ENCODE measurements at regions of chr2 and their contacts with region 1.

Region 1: DNA sequence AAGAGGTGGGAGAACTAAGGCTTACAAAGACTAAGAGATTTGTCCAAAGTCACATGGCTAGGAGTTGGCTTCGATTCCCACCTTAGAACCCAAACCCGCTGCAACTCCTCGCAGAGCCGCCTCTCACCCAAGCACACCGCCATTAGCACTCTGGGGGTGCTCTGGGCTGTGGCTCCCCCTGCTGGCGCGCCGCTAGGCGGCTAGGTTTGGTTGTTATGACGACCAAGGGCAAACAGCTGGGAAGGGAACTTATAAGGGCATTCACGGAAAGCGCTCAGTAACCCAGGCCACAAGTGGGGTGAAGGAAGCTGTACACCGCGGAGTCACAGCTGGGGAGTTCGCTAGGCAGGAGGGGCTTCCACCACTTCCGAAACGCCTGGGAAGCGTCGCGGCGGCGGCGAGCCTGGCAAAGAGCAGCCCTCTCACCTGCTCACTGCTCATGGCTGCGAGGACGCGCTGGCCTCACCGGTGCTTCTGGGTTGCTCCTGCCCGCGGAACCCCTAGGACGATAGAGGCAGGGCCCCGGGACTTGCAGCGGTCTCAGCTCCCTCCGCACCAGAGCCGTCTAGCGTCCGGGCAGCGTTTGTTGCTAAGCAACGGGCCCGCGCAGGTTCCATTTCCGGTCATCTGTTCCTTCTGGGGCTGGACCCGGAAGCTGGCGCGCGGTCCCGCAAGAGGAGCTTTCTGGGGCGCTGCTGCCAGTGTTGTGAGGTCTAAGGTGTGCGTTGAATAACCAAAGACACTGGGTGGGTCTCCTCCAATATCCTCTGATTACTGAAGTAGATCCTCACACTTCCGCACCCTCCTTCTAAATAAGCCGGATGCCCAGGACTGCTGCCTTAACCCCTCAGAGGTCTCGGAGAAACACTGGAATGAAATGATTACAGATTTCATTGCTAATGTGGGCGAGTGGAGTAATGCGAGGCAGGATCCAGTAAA is at the start of gene DNAH7:
- DNase-seq: peak; percentile 70
- ATAC-seq: peak; percentile 97
- H3K4me3 ChIP-seq: peak within 1 kb of the TSS; percentile 56 to 89 (median 78)
- H3K27ac ChIP-seq: peak within 1 kb of the TSS; percentile 48
- H3K4me1 ChIP-seq: peaks cover 10% of the 10 kb centered on the region
- H3K27me3 ChIP-seq: no peaks in the 10 kb centered on the region
- CTCF ChIP-seq: peak; percentile 98
- EP300 ChIP-seq: no peak
- POLR2A ChIP-seq: 0 out of 4 replicates have a peak, but pooled peaks of 1 of the 2 experiments have one; percentile 48
- RAD21 ChIP-seq: peak; percentile 67
- total RNA-seq, gene DNAH7: 0.07 and 0.09 TPM in 2 replicates

Region 2: DNA sequence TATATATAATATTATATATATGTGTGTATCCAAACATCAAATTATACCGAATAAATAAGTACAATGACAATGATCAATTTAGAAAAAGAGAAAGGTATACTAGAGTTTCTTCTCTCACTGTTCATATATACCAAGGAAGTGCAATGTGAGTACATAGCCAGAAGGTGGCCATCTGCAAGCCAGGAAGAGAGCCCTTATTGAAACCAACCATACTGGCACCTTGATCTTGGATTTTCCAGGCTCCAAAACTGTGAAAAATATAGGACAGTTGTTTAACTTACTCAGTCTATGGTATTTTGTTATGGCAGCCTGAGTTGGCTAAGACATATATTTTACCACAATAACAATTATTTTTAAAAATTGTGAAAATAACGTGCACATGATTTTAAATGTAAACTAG is 1901.7 kb before region 1 on chr2:
- CTCF ChIA-PET with region 1: no interaction called
- POLR2A ChIA-PET with region 1: no interaction called
- in situ Hi-C with region 1: no loop called
- intact Hi-C with region 1: loop called (anchors 5 kb)
- DNase-seq: peak; percentile 39
- ATAC-seq: peak; percentile 86
- H3K4me3 ChIP-seq: no peak overlapping the region
- H3K27ac ChIP-seq: no peak overlapping the region
- H3K4me1 ChIP-seq: no peaks in the 10 kb centered on the region
- H3K27me3 ChIP-seq: no peaks in the 10 kb centered on the region
- CTCF ChIP-seq: peak; percentile 65
- EP300 ChIP-seq: no peak
- POLR2A ChIP-seq: no peak
- RAD21 ChIP-seq: no peak

Region 3: GRCh38 chr2:195498176-195498575 is 570.4 kb before region 1 on chr2:
- CTCF ChIA-PET with region 1: interaction called, 7 read pairs
- POLR2A ChIA-PET with region 1: no interaction called
- in situ Hi-C with region 1: no loop called
- intact Hi-C with region 1: loop called (anchors 1 kb)
- DNase-seq: peak; percentile 50
- ATAC-seq: peak; percentile 72
- H3K4me3 ChIP-seq: no peak overlapping the region
- H3K27ac ChIP-seq: no peak overlapping the region
- H3K4me1 ChIP-seq: no peaks in the 10 kb centered on the region
- H3K27me3 ChIP-seq: 0 out of 5 replicates have a peak, but pooled peaks cover 0 to 3% of the 10 kb centered on the region in 2 experiments
- CTCF ChIP-seq: peak; percentile 52
- EP300 ChIP-seq: no peak
- POLR2A ChIP-seq: no peak
- RAD21 ChIP-seq: no peak

Region 4: GRCh38 chr2:195967336-195967735 is 101.2 kb before region 1 on chr2:
- CTCF ChIA-PET with region 1: no interaction called
- POLR2A ChIA-PET with region 1: no interaction called
- in situ Hi-C with region 1: no loop called
- intact Hi-C with region 1: no loop called
- DNase-seq: no peak
- ATAC-seq: no peak
- H3K4me3 ChIP-seq: no peak overlapping the region
- H3K27ac ChIP-seq: no peak overlapping the region
- H3K4me1 ChIP-seq: no peaks in the 10 kb centered on the region
- H3K27me3 ChIP-seq: no peaks in the 10 kb centered on the region
- CTCF ChIP-seq: no peak
- EP300 ChIP-seq: no peak
- POLR2A ChIP-seq: no peak
- RAD21 ChIP-seq: no peak

Region 5: GRCh38 chr2:196171248-196171871 is 102.8 kb after region 1 on chr2 and contains the start of gene STK17B:
- CTCF ChIA-PET with region 1: no interaction called
- POLR2A ChIA-PET with region 1: no interaction called
- in situ Hi-C with region 1: no loop called
- intact Hi-C with region 1: loop called (anchors 5 kb)
- DNase-seq: peak; percentile 89
- ATAC-seq: peak; percentile 92
- H3K4me3 ChIP-seq: peak within 1 kb of the TSS; percentile 84 to 89 (median 88)
- H3K27ac ChIP-seq: peak within 1 kb of the TSS; percentile 39
- H3K4me1 ChIP-seq: peaks cover 16% of the 10 kb centered on the region
- H3K27me3 ChIP-seq: peaks cover 3 to 29% of the 10 kb centered on the region in 2 experiments; a peak in 4 of 5 replicates
- CTCF ChIP-seq: peak; percentile 22; the same call in 1 of the 2 replicates
- EP300 ChIP-seq: no peak
- POLR2A ChIP-seq: peak; percentile 81 to 92
- RAD21 ChIP-seq: no peak; the same call in 1 of the 2 replicates
- total RNA-seq, gene STK17B: 4.5 and 7.7 TPM in 2 replicates

Region 6: DNA sequence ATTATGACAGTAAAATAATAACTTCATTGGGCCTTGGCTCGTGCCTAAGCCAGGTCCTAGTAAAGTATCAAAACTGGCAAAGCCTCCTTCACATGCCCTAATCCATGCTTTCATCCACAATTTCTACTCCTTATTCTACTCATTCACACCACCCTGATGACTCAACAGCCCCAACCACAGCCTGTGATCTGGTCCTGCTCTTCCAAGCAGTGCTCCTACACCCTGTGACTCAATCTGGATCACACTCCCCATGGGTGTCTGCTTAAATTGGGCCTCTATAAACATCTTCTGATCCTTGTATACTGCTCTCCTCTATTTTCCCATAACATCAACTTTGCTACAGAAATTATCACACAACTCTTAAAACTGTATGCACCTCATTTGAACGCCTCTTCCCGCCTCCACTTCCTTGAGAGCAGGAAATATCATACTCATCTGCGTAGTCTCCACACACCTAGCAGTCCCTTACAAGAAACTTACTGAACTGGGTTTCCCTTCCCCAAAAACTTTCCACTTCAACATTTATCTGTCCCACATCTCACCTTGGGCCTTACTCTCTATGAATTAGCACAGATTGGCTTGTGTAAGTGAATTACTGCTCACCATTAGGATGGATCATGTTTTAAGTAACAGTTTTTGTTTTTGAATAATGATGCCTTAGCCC is 715.0 kb after region 1 on chr2:
- CTCF ChIA-PET with region 1: no interaction called
- POLR2A ChIA-PET with region 1: no interaction called
- in situ Hi-C with region 1: no loop called
- intact Hi-C with region 1: no loop called
- DNase-seq: no peak
- ATAC-seq: no peak; the same call in 2 of the 3 replicates
- H3K4me3 ChIP-seq: no peak overlapping the region
- H3K27ac ChIP-seq: no peak overlapping the region
- H3K4me1 ChIP-seq: no peaks in the 10 kb centered on the region
- H3K27me3 ChIP-seq: no peaks in the 10 kb centered on the region
- CTCF ChIP-seq: no peak
- EP300 ChIP-seq: no peak
- POLR2A ChIP-seq: no peak
- RAD21 ChIP-seq: no peak

Measured in HepG2 (cell line).